Panc1 (cell line): ENCODE measurements at regions of chr2 and their contacts with region 1.

Region 1: DNA sequence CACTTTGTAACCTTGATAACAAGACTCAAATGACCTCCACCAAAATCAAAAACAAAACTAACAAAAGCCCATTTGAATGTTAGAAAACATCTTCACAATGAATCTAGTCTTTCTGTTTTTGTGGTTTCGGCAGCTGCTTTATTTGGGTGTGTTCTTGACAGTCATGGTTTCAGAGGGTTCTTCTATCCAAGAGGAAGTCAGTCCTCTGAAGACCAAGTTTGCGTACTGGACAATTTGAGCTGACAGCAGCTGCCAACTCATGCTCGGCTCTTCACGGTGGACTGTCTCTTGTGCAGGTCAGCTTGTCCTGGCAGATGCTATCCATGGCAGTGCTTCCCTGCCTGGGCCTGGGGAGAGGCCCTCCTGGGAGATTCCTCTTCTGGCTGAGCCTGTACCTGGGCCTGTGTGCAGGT is 91.0 kb downstream of the TMEM17 start:
- DNase-seq: no peak
- ATAC-seq: no peak
- H3K4me3 ChIP-seq: no peak overlapping the region
- H3K27ac ChIP-seq: no peak overlapping the region
- H3K4me1 ChIP-seq: no peaks in the 10 kb centered on the region
- H3K27me3 ChIP-seq: no peaks in the 10 kb centered on the region
- CTCF ChIP-seq: no peak

Region 2: GRCh38 chr2:61910603-61911002 is 504.4 kb before region 1 on chr2:
- CTCF ChIA-PET with region 1: no interaction called
- POLR2A ChIA-PET with region 1: no interaction called
- in situ Hi-C with region 1: no loop called
- intact Hi-C with region 1: loop called (anchors 5 kb)
- DNase-seq: no peak
- ATAC-seq: no peak
- H3K4me3 ChIP-seq: no peak overlapping the region
- H3K27ac ChIP-seq: no peak overlapping the region
- H3K4me1 ChIP-seq: peaks cover 13% of the 10 kb centered on the region; the same call in 1 of the 2 replicates
- H3K27me3 ChIP-seq: no peaks in the 10 kb centered on the region
- CTCF ChIP-seq: peak; percentile 70

Region 3: GRCh38 chr2:61993444-61994024 is 421.5 kb before region 1 on chr2:
- CTCF ChIA-PET with region 1: interaction called, 3 read pairs
- POLR2A ChIA-PET with region 1: no interaction called
- in situ Hi-C with region 1: no loop called
- intact Hi-C with region 1: loop called (anchors 5 kb)
- DNase-seq: peak; percentile 38
- ATAC-seq: peak; percentile 81
- H3K4me3 ChIP-seq: no peak overlapping the region
- H3K27ac ChIP-seq: no peak overlapping the region
- H3K4me1 ChIP-seq: no peaks in the 10 kb centered on the region
- H3K27me3 ChIP-seq: no peaks in the 10 kb centered on the region
- CTCF ChIP-seq: peak; percentile 72; the same call in 1 of the 2 replicates

Region 4: GRCh38 chr2:62195421-62196277 is 219.4 kb before region 1 on chr2 and contains the start of gene B3GNT2:
- CTCF ChIA-PET with region 1: no interaction called
- POLR2A ChIA-PET with region 1: no interaction called
- in situ Hi-C with region 1: no loop called
- intact Hi-C with region 1: loop called (anchors 5 kb)
- DNase-seq: no peak
- ATAC-seq: peak; percentile 90
- H3K4me3 ChIP-seq: peak within 1 kb of the TSS; percentile 88 to 91
- H3K27ac ChIP-seq: peak within 1 kb of the TSS; percentile 79
- H3K4me1 ChIP-seq: peaks cover 17% of the 10 kb centered on the region; the same call in 1 of the 2 replicates
- H3K27me3 ChIP-seq: no peaks in the 10 kb centered on the region
- CTCF ChIP-seq: no peak
- total RNA-seq, gene B3GNT2: 14.1 TPM

Region 5: GRCh38 chr2:62435720-62436119 is 20.7 kb after region 1 on chr2:
- CTCF ChIA-PET with region 1: no interaction called
- POLR2A ChIA-PET with region 1: no interaction called
- in situ Hi-C with region 1: no loop called
- intact Hi-C with region 1: no loop called
- DNase-seq: no peak
- ATAC-seq: no peak
- H3K4me3 ChIP-seq: no peak overlapping the region
- H3K27ac ChIP-seq: no peak overlapping the region
- H3K4me1 ChIP-seq: no peaks in the 10 kb centered on the region
- H3K27me3 ChIP-seq: no peaks in the 10 kb centered on the region; the same call in 1 of the 2 replicates
- CTCF ChIP-seq: no peak

Region 6: GRCh38 chr2:62801814-62802523 is 386.9 kb after region 1 on chr2:
- CTCF ChIA-PET with region 1: no interaction called
- POLR2A ChIA-PET with region 1: interaction called, 13 read pairs
- in situ Hi-C with region 1: no loop called
- intact Hi-C with region 1: no loop called
- DNase-seq: no peak
- ATAC-seq: peak; percentile 68; the same call in 1 of the 2 replicates
- H3K4me3 ChIP-seq: 0 out of 4 replicates have a peak overlapping the region, but pooled peaks of 1 of the 2 experiments have one; percentile 4
- H3K27ac ChIP-seq: no peak overlapping the region
- H3K4me1 ChIP-seq: 0 out of 2 replicates have a peak, but pooled peaks cover 2% of the 10 kb centered on the region
- H3K27me3 ChIP-seq: no peaks in the 10 kb centered on the region
- CTCF ChIP-seq: peak; percentile 47; the same call in 1 of the 2 replicates